B cell (primary cell): ENCODE measurements at regions of chr2 and their contacts with region 1.

Region 1: DNA sequence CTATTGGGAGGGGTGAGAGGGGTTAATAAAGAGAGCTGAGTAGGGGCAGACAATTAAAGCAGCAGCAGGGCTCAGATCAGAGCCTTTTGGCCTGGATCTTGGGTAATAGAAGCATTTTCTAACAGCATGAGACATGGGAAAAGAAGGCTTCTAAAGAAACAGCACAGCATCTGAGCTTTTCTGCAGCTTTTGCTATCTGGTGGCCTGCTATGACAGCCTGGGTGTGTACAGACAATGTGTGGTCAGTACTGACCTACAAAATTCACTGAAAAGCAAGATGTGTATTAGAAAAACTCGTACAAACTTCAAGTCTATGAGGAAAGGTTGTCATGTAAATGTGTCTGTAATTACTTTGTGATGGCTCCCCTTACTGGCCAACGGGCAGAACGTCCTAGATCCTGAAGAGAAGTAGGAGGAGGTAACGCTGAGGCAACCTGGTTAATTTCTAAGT is 95.6 kb downstream of the GALNT3 start:
- DNase-seq: peak; percentile 57
- ATAC-seq: peak; percentile 57
- H3K4me3 ChIP-seq: no peak overlapping the region
- H3K4me3 Mint-ChIP-seq: no peak overlapping the region
- H3K27ac ChIP-seq: no peak overlapping the region
- H3K27ac Mint-ChIP-seq: no peak overlapping the region
- H3K4me1 ChIP-seq: no peaks in the 10 kb centered on the region
- H3K4me1 Mint-ChIP-seq: peaks cover 5% of the 10 kb centered on the region
- H3K27me3 ChIP-seq: no peaks in the 10 kb centered on the region
- H3K27me3 Mint-ChIP-seq: no peaks in the 10 kb centered on the region
- CTCF ChIP-seq: peak; percentile 54

Region 2: GRCh38 chr2:165401285-165401852 is 297.1 kb before region 1 on chr2:
- CTCF ChIA-PET with region 1: interaction called, 6 read pairs
- POLR2A ChIA-PET with region 1: no interaction called
- intact Hi-C with region 1: loop called (anchors 1 kb)
- DNase-seq: peak; percentile 75
- ATAC-seq: no peak
- H3K4me3 ChIP-seq: no peak overlapping the region
- H3K4me3 Mint-ChIP-seq: no peak overlapping the region
- H3K27ac ChIP-seq: no peak overlapping the region
- H3K27ac Mint-ChIP-seq: no peak overlapping the region
- H3K4me1 ChIP-seq: no peaks in the 10 kb centered on the region
- H3K4me1 Mint-ChIP-seq: no peaks in the 10 kb centered on the region
- H3K27me3 ChIP-seq: no peaks in the 10 kb centered on the region
- H3K27me3 Mint-ChIP-seq: peaks cover 3% of the 10 kb centered on the region
- CTCF ChIP-seq: peak; percentile 83

Region 3: DNA sequence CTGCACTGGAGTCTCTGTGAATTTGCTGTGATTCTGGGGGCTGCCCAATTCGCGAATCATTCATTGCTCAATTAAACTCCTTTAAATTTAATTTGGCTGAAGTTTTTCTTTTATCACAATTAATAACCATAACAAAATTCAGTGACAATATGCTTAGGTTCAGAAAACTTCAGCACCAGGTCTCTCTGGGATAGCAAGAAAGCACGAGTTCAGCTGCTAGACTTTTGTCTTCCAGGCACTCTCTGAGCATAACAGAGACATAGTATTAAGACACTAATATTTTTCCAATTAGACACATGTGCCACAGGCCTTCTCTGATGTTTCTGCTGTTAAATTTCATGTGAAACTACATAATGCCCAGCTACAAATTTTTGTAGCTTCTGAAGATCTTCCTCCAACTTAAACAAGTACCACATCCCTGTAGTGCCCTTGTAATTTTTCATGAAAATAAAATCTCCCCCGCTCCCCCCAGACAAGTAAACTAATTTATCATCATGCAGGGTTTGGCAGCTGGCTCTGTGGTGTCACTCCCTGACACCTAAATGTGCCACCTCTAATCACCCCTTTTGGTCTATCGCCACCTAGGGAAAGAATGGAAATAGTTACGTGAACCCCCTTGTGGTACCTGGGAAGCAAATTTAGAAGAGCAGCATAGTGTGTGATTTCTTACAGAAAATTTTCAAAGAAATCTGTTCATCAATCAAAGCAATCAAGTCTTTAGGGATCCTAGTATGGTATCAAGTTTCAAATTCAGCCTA is 134.8 kb before region 1 on chr2:
- CTCF ChIA-PET with region 1: interaction called, 4 read pairs
- POLR2A ChIA-PET with region 1: no interaction called
- intact Hi-C with region 1: loop called (anchors 10 kb)
- DNase-seq: peak; percentile 13
- ATAC-seq: no peak
- H3K4me3 ChIP-seq: no peak overlapping the region
- H3K4me3 Mint-ChIP-seq: no peak overlapping the region
- H3K27ac ChIP-seq: no peak overlapping the region
- H3K27ac Mint-ChIP-seq: no peak overlapping the region
- H3K4me1 ChIP-seq: no peaks in the 10 kb centered on the region
- H3K4me1 Mint-ChIP-seq: no peaks in the 10 kb centered on the region
- H3K27me3 ChIP-seq: peaks cover 0 to 4% (median 0%) of the 10 kb centered on the region in 4 experiments
- H3K27me3 Mint-ChIP-seq: peaks cover 11% of the 10 kb centered on the region
- CTCF ChIP-seq: no peak

Region 4: DNA sequence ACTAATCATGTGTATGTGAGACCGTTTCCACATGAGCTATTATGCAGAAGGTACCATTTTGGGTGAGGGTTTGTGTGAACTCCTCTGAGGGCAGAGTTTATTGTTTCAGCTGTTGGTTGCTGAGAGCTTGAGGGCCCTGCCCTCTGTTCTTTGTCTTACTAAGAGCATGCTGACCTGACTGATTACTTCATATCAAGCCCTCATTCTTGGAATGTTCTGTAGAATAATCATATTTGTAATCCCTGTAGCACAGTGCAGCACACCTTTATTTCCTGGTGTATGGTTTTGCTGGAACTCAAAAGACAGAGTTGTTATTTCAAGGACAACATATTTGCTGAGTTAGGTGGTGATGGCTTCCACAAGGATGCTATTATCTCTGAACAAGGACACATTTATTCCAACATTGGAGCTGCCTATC is 22.9 kb before region 1 on chr2:
- CTCF ChIA-PET with region 1: no interaction called
- POLR2A ChIA-PET with region 1: no interaction called
- intact Hi-C with region 1: no loop called
- DNase-seq: no peak
- ATAC-seq: no peak
- H3K4me3 ChIP-seq: no peak overlapping the region
- H3K4me3 Mint-ChIP-seq: no peak overlapping the region
- H3K27ac ChIP-seq: no peak overlapping the region
- H3K27ac Mint-ChIP-seq: no peak overlapping the region
- H3K4me1 ChIP-seq: peaks cover 12 to 32% of the 10 kb centered on the region in 2 donors
- H3K4me1 Mint-ChIP-seq: peaks cover 29% of the 10 kb centered on the region
- H3K27me3 ChIP-seq: no peaks in the 10 kb centered on the region
- H3K27me3 Mint-ChIP-seq: no peaks in the 10 kb centered on the region
- CTCF ChIP-seq: no peak

Region 5: GRCh38 chr2:165777522-165778186 is 79.2 kb after region 1 on chr2:
- CTCF ChIA-PET with region 1: no interaction called
- POLR2A ChIA-PET with region 1: no interaction called
- intact Hi-C with region 1: no loop called
- DNase-seq: no peak
- ATAC-seq: peak; percentile 41
- H3K4me3 ChIP-seq: no peak overlapping the region
- H3K4me3 Mint-ChIP-seq: no peak overlapping the region
- H3K27ac ChIP-seq: peak overlapping the region in 1 of 2 donors; percentile 33
- H3K27ac Mint-ChIP-seq: peak overlapping the region; percentile 50
- H3K4me1 ChIP-seq: peaks cover 6 to 9% of the 10 kb centered on the region in 2 donors
- H3K4me1 Mint-ChIP-seq: peaks cover 16% of the 10 kb centered on the region
- H3K27me3 ChIP-seq: no peaks in the 10 kb centered on the region
- H3K27me3 Mint-ChIP-seq: no peaks in the 10 kb centered on the region
- CTCF ChIP-seq: no peak